Prostate gland (tissue), 2 donors: ENCODE measurements at regions of chr4 and their contacts with region 1.

Region 1: GRCh38 chr4:185754961-185755360 is 57.0 kb downstream of the SORBS2 start:
- DNase-seq: no peak
- H3K4me3 ChIP-seq: no peak overlapping the region
- H3K27ac ChIP-seq: no peak overlapping the region
- H3K4me1 ChIP-seq: no peaks in the 10 kb centered on the region
- H3K27me3 ChIP-seq: no peaks in the 10 kb centered on the region
- CTCF ChIP-seq: no peak
- POLR2A ChIP-seq: no peak

Region 2: GRCh38 chr4:184825896-184826690 is 928.9 kb before region 1 on chr4 and contains the start of gene ACSL1:
- intact Hi-C with region 1: loop called (anchors 10 kb)
- DNase-seq: peak; percentile 81
- H3K4me3 ChIP-seq: peak within 1 kb of the TSS; percentile 60 to 95
- H3K27ac ChIP-seq: peak within 1 kb of the TSS; percentile 93 to 94
- H3K4me1 ChIP-seq: peaks cover 2% of the 10 kb centered on the region
- H3K27me3 ChIP-seq: no peaks in the 10 kb centered on the region
- CTCF ChIP-seq: peak in 1 of 4 experiments; percentile 37
- POLR2A ChIP-seq: peak; percentile 76
- total RNA-seq, gene ACSL1: 71.7 to 157 TPM

Region 3: GRCh38 chr4:185865901-185866328 is 111.0 kb after region 1 on chr4:
- intact Hi-C with region 1: no loop called
- DNase-seq: peak; percentile 59
- H3K4me3 ChIP-seq: no peak overlapping the region
- H3K27ac ChIP-seq: peak overlapping the region; percentile 56 to 59
- H3K4me1 ChIP-seq: peaks cover 3% of the 10 kb centered on the region
- H3K27me3 ChIP-seq: no peaks in the 10 kb centered on the region
- CTCF ChIP-seq: no peak
- POLR2A ChIP-seq: no peak